Thyroid gland (tissue), 4 donors: ENCODE measurements at regions of chr16 and their contacts with region 1.

Region 1: DNA sequence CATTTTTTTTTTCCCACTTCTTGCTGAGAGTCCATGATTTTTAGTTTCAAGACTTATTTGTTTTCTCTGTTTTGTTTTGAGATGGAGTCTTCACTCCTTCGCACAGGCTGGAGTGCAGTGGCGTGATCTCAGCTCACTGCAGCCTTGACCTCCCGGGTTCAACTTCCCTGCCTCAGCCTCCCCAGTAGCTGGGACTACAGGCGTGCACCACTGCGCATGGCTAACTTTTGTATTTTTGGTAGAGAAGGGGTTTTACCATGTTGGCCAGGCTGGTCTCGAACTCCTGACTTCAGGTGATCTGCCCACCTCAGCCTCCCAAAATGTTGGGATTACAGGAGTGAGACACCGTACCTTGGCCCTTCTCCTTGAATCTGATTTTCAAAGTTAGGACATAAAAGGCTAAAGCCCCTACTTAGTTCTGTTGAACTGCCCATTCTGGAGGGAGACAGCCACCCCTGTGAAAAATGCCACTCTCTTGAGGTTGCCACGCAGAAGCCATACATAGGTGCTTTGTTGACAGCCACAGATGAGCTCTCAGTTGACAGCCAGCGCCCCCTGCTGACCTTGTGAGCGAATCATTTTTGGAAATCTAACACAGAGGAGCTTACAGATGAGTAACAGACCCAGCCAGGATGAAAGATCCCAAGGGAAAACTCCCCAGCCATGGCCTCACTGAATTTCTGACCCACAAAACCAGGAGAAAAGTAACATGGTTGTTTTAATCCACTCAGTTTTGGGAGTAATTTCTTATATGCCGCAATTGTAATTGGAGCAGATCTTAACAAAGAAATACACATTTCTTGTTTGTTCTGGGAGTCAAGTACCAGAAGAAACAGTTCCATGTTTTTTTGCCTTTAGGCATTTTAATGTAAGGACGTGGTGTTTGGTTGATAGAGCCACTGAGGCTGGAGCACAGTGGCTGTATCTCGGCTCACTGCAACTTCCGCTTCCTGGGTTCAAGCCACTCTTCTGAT is 38.8 kb downstream of the PKD1L3 start:
- DNase-seq: peak; percentile 76 to 85
- H3K4me3 ChIP-seq: no peak overlapping the region
- H3K27ac ChIP-seq: no peak overlapping the region
- H3K4me1 ChIP-seq: no peaks in the 10 kb centered on the region
- H3K27me3 ChIP-seq: no peaks in the 10 kb centered on the region
- CTCF ChIP-seq: peak; percentile 34 to 81 (median 72)
- POLR2A ChIP-seq: no peak

Region 2: GRCh38 chr16:71883849-71884638 is 77.3 kb before region 1 on chr16 and contains the start of gene ZNF821:
- intact Hi-C with region 1: loop called (anchors 10 kb)
- DNase-seq: peak; percentile 82 to 86
- H3K4me3 ChIP-seq: peak within 1 kb of the TSS; percentile 81 to 98 (median 85)
- H3K27ac ChIP-seq: peak within 1 kb of the TSS; percentile 89 to 99 (median 95)
- H3K4me1 ChIP-seq: peaks cover 5% of the 10 kb centered on the region in 2 donors
- H3K27me3 ChIP-seq: no peaks in the 10 kb centered on the region
- CTCF ChIP-seq: peak in 2 of 6 experiments; percentile 33 to 40
- POLR2A ChIP-seq: peak in 1 of 2 donors; percentile 65
- total RNA-seq, gene ZNF821: 7.9 to 17.8 (median 11.6) TPM